ENCODE measurements at regions of chr1 and their contacts with region 1.

Region 1: GRCh38 chr1:160951443-160952128 is 3.0 kb downstream of the ITLN2 start:
- DNase-seq: peak; percentile 73 to 78
- ATAC-seq: peak; percentile 73
- H3K4me3 ChIP-seq: no peak overlapping the region
- H3K27ac ChIP-seq: no peak overlapping the region
- H3K4me1 ChIP-seq: no peaks in the 10 kb centered on the region
- H3K27me3 ChIP-seq: no peaks in the 10 kb centered on the region

Region 2: GRCh38 chr1:160726498-160727315 is 224.9 kb before region 1 on chr1:
- intact Hi-C with region 1: loop called in 1 of 2 experiments (anchors 10 kb)
- DNase-seq: peak in 1 of 2 donors; percentile 62
- ATAC-seq: no peak
- H3K4me3 ChIP-seq: no peak overlapping the region
- H3K27ac ChIP-seq: no peak overlapping the region
- H3K4me1 ChIP-seq: no peaks in the 10 kb centered on the region
- H3K27me3 ChIP-seq: no peaks in the 10 kb centered on the region

Region 3: GRCh38 chr1:160832856-160833255 is 118.7 kb before region 1 on chr1:
- intact Hi-C with region 1: loop called in 1 of 2 experiments (anchors 1 kb)
- DNase-seq: no peak
- ATAC-seq: no peak
- H3K4me3 ChIP-seq: no peak overlapping the region
- H3K27ac ChIP-seq: no peak overlapping the region
- H3K4me1 ChIP-seq: no peaks in the 10 kb centered on the region
- H3K27me3 ChIP-seq: no peaks in the 10 kb centered on the region